ENCODE measurements at regions of chr19 and their contacts with region 1.

Region 1: GRCh38 chr19:35628565-35629331 is at the start of gene RBM42:
- DNase-seq: peak; percentile 99
- H3K4me3 Mint-ChIP-seq: peak within 1 kb of the TSS; percentile 99
- H3K27ac Mint-ChIP-seq: peak within 1 kb of the TSS; percentile 100
- H3K4me1 Mint-ChIP-seq: peaks cover 23% of the 10 kb centered on the region
- H3K27me3 Mint-ChIP-seq: peaks cover 2% of the 10 kb centered on the region
- total RNA-seq, gene RBM42: 114 and 115 TPM in 2 replicates

Region 2: DNA sequence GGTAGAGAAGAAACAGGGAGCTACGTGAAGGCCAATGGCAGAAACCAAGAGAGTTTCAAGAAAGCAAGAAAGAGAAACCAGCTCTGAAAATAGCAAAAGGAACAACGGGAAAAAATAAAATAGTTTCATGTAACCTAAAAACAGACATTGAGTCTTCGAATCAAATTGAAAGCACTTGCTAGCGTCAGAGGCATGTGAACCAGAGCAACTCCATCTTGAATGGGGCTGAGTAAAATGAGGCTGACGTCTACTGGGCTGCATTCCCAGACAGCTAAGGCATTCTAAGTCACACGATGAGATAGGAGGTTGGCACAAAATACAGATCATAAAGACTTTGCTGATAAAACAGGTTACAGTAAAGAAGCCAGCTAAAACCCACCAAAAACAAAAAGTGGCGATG is 50.0 kb before region 1 on chr19:
- intact Hi-C with region 1: no loop called
- DNase-seq: no peak
- H3K4me3 Mint-ChIP-seq: no peak overlapping the region
- H3K27ac Mint-ChIP-seq: no peak overlapping the region
- H3K4me1 Mint-ChIP-seq: no peaks in the 10 kb centered on the region
- H3K27me3 Mint-ChIP-seq: peaks cover 3% of the 10 kb centered on the region

Region 3: GRCh38 chr19:35612559-35613321 is 16.0 kb before region 1 on chr19 and contains the start of gene HAUS5:
- intact Hi-C with region 1: loop called (anchors 1 kb)
- DNase-seq: peak; percentile 99
- H3K4me3 Mint-ChIP-seq: peak within 1 kb of the TSS; percentile 89
- H3K27ac Mint-ChIP-seq: peak within 1 kb of the TSS; percentile 92
- H3K4me1 Mint-ChIP-seq: peaks cover 28% of the 10 kb centered on the region
- H3K27me3 Mint-ChIP-seq: no peaks in the 10 kb centered on the region
- total RNA-seq, gene HAUS5: 45.8 TPM in 2 replicates

Region 4: GRCh38 chr19:35710784-35711723 is 82.3 kb after region 1 on chr19:
- intact Hi-C with region 1: loop called (anchors 5 kb)
- DNase-seq: peak; percentile 89
- H3K4me3 Mint-ChIP-seq: peak overlapping the region; percentile 65
- H3K27ac Mint-ChIP-seq: peak overlapping the region; percentile 96
- H3K4me1 Mint-ChIP-seq: peaks cover 42% of the 10 kb centered on the region
- H3K27me3 Mint-ChIP-seq: no peaks in the 10 kb centered on the region